ENCODE measurements at regions of chr12 and their contacts with region 1.

Region 1: DNA sequence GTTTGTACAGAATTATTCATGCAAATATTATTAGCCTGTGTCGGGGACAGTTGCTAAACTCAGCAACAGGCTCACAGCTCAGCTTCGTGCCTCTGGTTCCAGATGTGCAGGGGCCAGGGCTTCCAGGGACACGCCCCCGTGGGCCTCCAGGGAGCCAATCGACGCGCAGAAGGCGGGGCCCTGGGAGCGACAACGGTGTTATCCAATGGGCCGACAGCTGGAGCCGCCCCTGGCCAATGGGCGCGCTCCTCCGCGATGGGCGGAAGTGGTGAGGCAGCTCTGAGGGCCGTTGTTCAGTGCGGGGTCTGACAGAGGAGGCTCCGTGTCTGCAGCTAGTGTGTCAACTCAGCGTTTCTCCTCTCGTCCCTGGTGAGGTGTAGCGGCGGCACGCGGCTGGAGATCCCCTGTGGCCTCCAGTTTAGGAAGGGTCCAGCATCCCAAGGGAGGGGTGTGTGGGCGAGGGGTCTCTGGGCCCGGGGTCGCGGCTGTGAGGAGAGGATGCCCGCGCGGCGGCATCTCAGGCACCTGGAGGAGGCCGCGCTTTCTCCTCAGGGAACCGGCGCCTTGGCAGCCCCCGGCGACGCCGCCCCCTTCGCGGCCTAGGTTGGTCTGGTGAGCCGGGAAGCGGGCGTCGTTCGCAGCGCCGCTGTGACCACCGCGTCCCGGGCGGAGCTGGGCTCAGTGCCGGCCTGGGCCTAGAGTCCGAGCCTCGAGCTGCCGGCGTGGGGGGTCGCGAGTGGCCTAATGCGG is at the start of gene TRAFD1:
- DNase-seq: peak; percentile 99
- H3K4me3 ChIP-seq: peak within 1 kb of the TSS; percentile 80 to 94 (median 94)
- H3K27ac ChIP-seq: peak within 1 kb of the TSS; percentile 96 to 99 (median 98)
- H3K4me1 ChIP-seq: peaks cover 0 to 81% (median 65%) of the 10 kb centered on the region in 4 donors
- H3K27me3 ChIP-seq: no peaks in the 10 kb centered on the region
- CTCF ChIP-seq: no peak
- EP300 ChIP-seq: peak in 1 of 4 donors; percentile 1
- POLR2A ChIP-seq: peak; percentile 96 to 98
- total RNA-seq, gene TRAFD1: 42.1 to 90.8 (median 74.7) TPM

Region 2: DNA sequence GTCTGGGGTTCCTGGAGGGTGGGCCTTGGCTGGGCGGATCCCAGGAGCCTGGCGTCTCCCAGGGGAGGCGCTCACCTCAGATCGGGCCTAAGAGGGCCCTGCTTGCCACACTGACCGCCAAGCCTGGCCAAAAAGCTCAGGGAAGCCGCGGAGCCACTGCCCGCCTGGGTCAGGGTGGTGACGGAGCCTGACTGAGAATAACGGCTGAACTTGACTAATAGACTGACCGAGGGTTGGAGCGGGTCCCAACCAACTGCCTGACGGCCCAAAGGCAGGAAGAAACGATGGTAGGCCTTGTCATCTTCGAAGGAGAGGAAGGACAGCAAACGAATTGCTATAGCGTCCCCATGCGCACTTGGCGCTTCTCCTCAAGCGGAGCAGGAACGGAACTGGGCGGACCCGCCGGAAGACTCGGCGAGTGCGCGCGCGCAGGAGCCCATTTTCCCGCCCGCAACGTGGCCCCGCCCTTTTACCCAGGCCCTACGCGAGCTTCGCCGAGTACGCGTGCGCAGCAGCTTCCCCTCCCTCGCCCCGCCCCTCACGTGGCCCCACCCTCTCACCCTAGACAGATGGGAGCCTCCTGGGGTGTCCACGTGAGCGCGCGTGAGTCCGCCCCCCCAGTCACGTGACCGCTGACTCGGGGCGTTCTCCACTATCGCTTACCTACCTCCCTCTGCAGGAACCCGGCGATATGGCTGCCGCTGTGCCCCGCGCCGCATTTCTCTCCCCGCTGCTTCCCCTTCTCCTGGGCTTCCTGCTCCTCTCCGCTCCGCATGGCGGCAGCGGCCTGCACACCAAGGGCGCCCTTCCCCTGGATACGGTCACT is 112.4 kb before region 1 on chr12 and contains the starts of genes ERP29 and TMEM116:
- intact Hi-C with region 1: loop called (anchors 5 kb)
- DNase-seq: peak; percentile 100
- H3K4me3 ChIP-seq: peak within 1 kb of the TSS; percentile 83 to 100 (median 95)
- H3K27ac ChIP-seq: peak within 1 kb of the TSS; percentile 92 to 97 (median 96)
- H3K4me1 ChIP-seq: peaks cover 0 to 41% (median 29%) of the 10 kb centered on the region in 4 donors
- H3K27me3 ChIP-seq: no peaks in the 10 kb centered on the region
- CTCF ChIP-seq: peak; percentile 52 to 85 (median 70)
- EP300 ChIP-seq: peak in 2 of 4 donors; percentile 8 to 91
- POLR2A ChIP-seq: peak; percentile 96 to 97
- total RNA-seq, gene ERP29: 43.0 to 74.4 (median 54.3) TPM
- total RNA-seq, gene TMEM116: 7.5 to 16.6 (median 9.5) TPM

Region 3: GRCh38 chr12:112046003-112046402 is 79.4 kb before region 1 on chr12:
- intact Hi-C with region 1: loop called (anchors 2 kb)
- DNase-seq: peak; percentile 80
- H3K4me3 ChIP-seq: no peak overlapping the region
- H3K27ac ChIP-seq: peak overlapping the region; percentile 68 to 88 (median 82)
- H3K4me1 ChIP-seq: peaks cover 0 to 65% (median 24%) of the 10 kb centered on the region in 4 donors
- H3K27me3 ChIP-seq: no peaks in the 10 kb centered on the region
- CTCF ChIP-seq: no peak
- EP300 ChIP-seq: peak; percentile 72 to 97 (median 86)
- POLR2A ChIP-seq: no peak

Region 4: DNA sequence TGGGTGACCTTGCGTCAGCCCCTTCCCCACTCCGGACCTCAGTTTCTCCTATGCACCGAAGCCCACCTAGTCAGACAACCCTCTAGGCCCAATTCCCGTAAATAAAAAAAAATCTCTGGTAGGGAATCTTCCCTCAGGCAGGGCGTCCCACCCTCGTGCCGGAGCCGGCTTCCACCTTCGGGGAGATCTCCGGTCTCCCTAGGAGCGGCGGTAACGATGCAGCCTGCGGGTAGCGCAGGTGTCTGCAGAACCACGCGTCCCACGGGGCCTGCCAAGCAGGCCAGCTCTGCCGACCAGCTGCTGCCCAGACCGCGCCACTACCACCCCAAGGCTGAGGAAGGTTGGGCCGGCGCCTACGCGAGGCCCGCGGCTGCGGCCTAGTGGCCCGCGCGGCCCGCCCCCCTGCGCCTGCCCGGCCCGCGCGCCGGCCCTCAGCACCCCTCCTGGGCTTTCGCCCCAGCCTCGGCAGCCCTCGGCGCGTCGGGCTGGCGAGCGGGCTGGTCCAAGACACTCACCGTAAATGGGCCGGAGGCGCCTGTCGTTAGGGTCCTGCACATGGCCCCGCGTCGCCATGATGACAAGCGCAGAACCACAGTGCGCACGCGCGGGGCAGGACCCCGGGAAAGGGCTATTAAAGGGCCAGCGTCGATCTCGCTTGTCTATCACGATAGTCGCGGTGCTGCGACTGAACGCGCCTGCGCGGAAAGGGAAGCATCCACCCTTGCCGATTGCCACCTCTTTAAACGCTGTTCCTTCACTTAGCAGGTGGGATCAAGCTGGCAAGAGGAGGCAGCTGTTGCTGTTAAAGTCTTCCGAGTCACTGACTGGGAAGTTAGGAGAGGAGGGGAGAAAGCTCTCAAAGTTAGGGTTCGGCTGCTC is 17.0 kb before region 1 on chr12 and contains the start of gene NAA25:
- intact Hi-C with region 1: loop called (anchors 1 kb)
- DNase-seq: peak; percentile 96
- H3K4me3 ChIP-seq: peak within 1 kb of the TSS; percentile 76 to 85 (median 80)
- H3K27ac ChIP-seq: peak within 1 kb of the TSS; percentile 95 to 99 (median 97)
- H3K4me1 ChIP-seq: peaks cover 0 to 49% (median 33%) of the 10 kb centered on the region in 4 donors
- H3K27me3 ChIP-seq: no peaks in the 10 kb centered on the region
- CTCF ChIP-seq: no peak
- EP300 ChIP-seq: no peak
- POLR2A ChIP-seq: peak in 1 of 2 donors; percentile 43
- total RNA-seq, gene NAA25: 21.6 to 26.6 (median 22.5) TPM

Measured in sigmoid colon (tissue), 7 donors.